MCF 10A (cell line): ENCODE measurements at regions of chr1 and their contacts with region 1.

Region 1: DNA sequence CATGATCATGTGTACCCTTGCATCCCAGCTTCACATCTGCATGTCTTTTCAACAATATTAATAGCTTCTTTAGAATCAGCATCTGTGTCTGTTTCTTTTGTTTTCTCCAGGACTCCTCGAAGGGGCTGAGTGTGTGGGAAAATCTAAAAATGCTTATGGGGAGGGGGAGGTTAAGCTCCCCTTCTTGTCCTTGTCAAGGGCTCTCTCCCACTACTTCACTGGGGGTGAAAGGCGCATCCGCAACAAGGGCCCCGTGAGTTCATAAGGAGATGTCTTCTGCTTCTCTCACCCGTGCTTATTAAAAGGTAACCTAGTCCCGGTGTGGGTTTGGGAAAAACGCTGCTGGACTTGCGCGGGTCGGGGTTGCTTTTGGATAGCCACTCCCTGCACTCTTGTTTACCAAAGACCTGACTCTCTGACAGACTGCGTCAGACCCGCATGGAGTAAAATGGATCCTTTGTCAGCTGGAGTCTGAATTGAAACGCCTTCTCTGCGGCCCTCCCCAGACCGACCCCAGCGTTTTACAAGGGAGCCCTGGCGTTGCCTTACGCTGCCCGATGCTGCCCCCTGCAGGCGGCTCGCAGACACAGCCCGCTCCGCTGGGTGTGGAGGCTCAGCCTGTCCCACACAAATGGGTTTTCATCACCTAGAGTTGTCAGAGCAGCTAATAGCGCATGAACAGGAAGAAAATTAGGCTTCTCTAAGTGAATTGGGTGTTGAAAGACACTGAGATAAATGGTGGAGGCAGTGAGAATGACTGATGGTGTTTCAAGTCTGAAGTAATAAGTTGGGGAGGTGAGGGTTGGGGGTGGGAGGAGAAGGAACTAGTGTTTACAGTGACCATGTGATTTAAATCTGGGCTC is 53.8 kb downstream of the IER5 start:
- DNase-seq: peak; percentile 91
- H3K4me3 Mint-ChIP-seq: peak overlapping the region; percentile 40
- H3K27ac Mint-ChIP-seq: no peak overlapping the region
- H3K4me1 Mint-ChIP-seq: peaks cover 53% of the 10 kb centered on the region
- H3K27me3 Mint-ChIP-seq: no peaks in the 10 kb centered on the region
- CTCF ChIP-seq: peak; percentile 99

Region 2: DNA sequence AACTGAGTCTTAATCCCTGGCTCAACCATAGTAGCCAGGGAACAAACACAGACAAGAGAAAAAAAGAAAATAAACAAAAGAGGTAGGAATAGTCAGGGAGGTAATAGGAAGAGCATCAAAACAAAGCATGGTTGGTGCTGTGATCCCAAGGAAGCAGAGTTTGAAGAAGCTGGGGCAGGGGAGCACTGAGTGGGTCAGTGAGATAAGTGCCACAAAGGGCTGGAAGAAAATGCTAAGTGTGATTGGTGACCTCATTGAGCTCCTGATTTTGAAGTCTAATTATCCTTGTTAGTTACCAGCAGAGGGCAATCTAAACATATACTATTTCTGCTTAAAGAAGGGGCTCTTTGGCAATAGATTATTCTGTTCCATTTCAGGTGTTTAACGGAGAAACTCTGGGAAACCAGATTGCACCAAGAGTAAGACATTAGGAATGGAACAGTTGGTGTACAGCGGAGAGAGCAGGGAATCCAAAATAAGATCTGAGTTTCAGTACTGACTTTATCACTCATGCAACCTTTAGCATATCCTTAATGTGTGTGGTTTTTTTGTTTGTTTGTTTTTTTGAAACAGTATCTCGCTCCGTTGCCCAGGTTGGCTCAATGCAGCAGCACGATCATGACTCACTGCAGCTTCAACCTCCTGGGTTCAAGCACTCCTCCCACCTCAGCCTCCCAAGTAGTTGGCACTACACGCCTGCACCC is 260.4 kb before region 1 on chr1:
- CTCF ChIA-PET with region 1: interaction called, 78 read pairs
- POLR2A ChIA-PET with region 1: interaction called, 11 read pairs
- intact Hi-C with region 1: loop called (anchors 1 kb)
- DNase-seq: peak; percentile 60
- H3K4me3 Mint-ChIP-seq: no peak overlapping the region
- H3K27ac Mint-ChIP-seq: peak overlapping the region; percentile 44
- H3K4me1 Mint-ChIP-seq: peaks cover 14% of the 10 kb centered on the region
- H3K27me3 Mint-ChIP-seq: no peaks in the 10 kb centered on the region
- CTCF ChIP-seq: peak; percentile 67

Region 3: DNA sequence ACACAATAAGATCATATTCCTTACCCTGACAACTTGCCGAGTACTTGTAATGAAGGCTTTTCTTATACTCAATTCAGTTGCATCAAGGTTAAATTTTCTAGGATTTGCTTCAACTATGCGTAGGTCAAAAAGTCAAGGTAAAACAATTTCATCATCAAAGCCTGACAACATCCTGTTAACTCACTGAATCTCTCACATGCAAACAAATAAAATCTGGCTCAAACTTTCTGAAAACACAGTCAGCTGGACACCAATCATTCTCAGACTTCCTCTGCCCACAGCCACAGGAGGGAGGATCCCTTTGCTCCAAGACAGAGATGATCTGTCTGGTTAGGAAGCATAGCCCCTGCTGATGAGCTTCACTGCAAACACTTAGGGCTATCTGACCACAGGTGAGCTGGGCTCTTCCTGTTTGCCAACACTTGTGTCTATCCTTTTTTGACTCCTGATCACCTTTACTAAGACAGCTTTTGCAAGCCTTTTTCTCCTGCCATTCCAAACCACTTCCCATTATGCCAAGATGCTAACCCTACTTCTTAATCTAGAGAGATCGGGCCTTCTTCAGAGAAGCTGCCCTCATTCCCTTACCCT is 139.7 kb before region 1 on chr1:
- CTCF ChIA-PET with region 1: interaction called, 24 read pairs
- POLR2A ChIA-PET with region 1: interaction called, 4 read pairs
- intact Hi-C with region 1: no loop called
- DNase-seq: no peak
- H3K4me3 Mint-ChIP-seq: no peak overlapping the region
- H3K27ac Mint-ChIP-seq: no peak overlapping the region
- H3K4me1 Mint-ChIP-seq: peaks cover 5% of the 10 kb centered on the region
- H3K27me3 Mint-ChIP-seq: no peaks in the 10 kb centered on the region
- CTCF ChIP-seq: no peak

Region 4: GRCh38 chr1:181057079-181057478 is 85.2 kb before region 1 on chr1:
- CTCF ChIA-PET with region 1: interaction called, 14 read pairs
- POLR2A ChIA-PET with region 1: no interaction called
- intact Hi-C with region 1: no loop called
- DNase-seq: no peak
- H3K4me3 Mint-ChIP-seq: no peak overlapping the region
- H3K27ac Mint-ChIP-seq: no peak overlapping the region
- H3K4me1 Mint-ChIP-seq: no peaks in the 10 kb centered on the region
- H3K27me3 Mint-ChIP-seq: no peaks in the 10 kb centered on the region
- CTCF ChIP-seq: no peak

Region 5: DNA sequence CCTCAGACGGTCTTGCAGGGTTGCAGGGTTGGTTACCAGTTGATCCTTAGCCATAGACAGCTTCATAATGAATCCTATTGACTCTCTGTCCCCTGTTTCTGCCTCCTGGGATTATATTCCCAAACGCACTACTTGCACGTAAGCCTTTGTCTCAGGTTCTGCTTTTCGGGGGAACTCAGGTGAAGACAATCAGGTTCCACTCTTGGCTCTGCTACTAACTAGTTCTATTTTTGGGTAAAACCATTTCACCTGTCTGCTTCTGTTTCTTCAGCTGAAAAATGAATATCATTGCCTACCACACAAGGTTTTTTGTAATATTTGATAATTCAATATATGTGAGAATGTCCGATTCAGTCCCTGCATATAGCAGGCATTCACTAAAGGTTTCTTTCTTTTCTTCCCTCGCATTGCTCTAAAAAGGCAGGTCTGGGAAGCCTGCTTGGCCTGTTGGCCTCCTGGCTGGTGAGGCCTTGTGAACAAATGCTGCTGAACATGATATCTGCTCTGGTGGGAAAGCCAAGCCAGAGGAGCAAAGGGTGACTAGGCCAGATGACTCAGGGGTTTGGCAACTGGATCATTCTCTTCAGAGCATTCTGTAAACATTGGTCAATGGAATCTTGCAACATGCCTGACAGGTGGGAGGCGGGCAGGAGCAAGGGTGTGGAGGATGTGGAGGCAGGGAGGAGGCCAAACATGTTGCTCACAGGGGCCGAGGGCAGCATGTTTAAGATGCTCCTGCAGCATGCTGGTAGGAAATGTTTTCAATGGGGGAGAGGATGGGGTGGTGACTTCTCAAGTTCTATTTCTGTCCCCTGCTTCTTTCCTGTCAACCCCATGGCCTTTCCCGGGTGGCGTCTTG is 30.0 kb before region 1 on chr1:
- CTCF ChIA-PET with region 1: interaction called, 198 read pairs
- POLR2A ChIA-PET with region 1: interaction called, 1,402 read pairs
- intact Hi-C with region 1: no loop called
- DNase-seq: peak; percentile 100
- H3K4me3 Mint-ChIP-seq: peak overlapping the region; percentile 48
- H3K27ac Mint-ChIP-seq: peak overlapping the region; percentile 86
- H3K4me1 Mint-ChIP-seq: peaks cover 51% of the 10 kb centered on the region
- H3K27me3 Mint-ChIP-seq: no peaks in the 10 kb centered on the region
- CTCF ChIP-seq: no peak

Region 6: GRCh38 chr1:181166377-181167196 is 24.3 kb after region 1 on chr1:
- CTCF ChIA-PET with region 1: interaction called, 162 read pairs
- POLR2A ChIA-PET with region 1: interaction called, 8 read pairs
- intact Hi-C with region 1: loop called (anchors 1 kb)
- DNase-seq: peak; percentile 90
- H3K4me3 Mint-ChIP-seq: no peak overlapping the region
- H3K27ac Mint-ChIP-seq: no peak overlapping the region
- H3K4me1 Mint-ChIP-seq: no peaks in the 10 kb centered on the region
- H3K27me3 Mint-ChIP-seq: no peaks in the 10 kb centered on the region
- CTCF ChIP-seq: peak; percentile 97

Region 7: DNA sequence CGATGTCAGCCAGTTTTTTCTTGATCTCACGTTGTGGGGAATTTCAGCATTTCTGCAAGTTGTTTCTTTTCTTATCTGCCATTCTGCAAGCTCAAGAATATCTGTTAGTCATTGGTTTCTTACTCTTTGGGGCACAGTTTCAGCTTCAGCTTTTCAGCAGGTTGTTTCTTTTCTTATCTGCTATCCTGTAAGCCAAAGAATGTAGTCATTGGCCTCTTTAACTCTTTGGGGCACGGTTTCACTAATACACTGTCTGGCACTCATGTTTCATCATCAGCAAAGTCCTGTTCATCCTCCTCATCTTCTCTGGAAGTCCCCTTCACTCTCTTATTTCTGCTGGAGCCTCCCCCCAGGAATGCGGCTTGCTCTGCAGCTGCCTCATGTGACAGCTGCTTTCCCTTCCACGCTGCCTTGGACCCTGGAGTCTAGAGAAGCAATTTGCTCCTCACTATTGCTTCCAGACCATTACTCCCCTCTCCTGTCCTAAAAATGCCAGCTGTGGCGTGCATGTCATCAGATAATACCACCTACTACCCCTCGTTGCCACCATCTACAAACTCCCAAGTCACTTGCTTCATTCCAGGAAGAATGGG is 274.0 kb after region 1 on chr1:
- CTCF ChIA-PET with region 1: no interaction called
- POLR2A ChIA-PET with region 1: no interaction called
- intact Hi-C with region 1: no loop called
- DNase-seq: no peak
- H3K4me3 Mint-ChIP-seq: no peak overlapping the region
- H3K27ac Mint-ChIP-seq: no peak overlapping the region
- H3K4me1 Mint-ChIP-seq: no peaks in the 10 kb centered on the region
- H3K27me3 Mint-ChIP-seq: no peaks in the 10 kb centered on the region
- CTCF ChIP-seq: no peak